ENCODE measurements at regions of chr19 and their contacts with region 1.

Region 1: DNA sequence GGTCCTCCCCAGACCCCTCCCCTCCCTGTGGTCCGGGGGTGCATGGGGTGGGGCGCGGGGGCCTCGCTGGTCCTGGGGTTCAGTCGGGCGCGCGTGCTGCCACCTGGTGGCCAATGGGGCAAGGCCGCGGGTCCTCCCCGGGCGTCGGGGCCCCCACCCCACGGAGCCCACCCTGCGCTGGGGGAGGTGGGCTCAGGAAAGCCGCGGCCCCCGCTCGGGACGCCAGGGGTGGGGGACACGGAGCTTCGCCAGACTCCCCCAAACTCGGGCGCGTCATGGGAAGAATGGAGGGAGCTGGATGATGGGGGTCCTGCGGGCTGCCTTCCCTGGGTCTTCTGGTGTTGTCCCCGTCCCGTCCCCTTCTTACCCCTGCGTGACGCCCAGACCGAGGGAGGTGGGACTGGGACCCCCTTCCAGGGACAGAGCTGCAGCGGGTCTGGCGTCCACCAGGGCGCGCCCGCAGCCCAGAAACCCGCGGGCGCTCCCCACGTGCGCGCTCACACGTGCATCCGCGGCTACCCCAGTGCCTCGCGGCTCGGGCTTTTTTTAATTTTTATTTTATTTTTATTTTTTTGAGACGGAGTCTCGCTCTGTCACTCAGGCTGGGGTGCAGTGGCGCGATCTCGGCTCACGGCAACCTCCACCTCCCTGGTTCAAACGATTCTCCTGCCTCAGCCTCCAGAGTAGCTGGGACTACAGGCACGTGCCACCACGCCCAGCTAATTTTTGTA is 19.8 kb upstream of the TCF3 start:
- DNase-seq: peak; percentile 67
- ATAC-seq: peak; percentile 70

Region 2: GRCh38 chr19:1825909-1826556 is 153.8 kb after region 1 on chr19:
- intact Hi-C with region 1: loop called (anchors 10 kb)
- DNase-seq: peak; percentile 86
- ATAC-seq: peak; percentile 84

Measured in Right ventricle myocardium superior (tissue), 1 donor.